Breast epithelium (tissue), 4 donors: ENCODE measurements at regions of chr2 and their contacts with region 1.

Region 1: DNA sequence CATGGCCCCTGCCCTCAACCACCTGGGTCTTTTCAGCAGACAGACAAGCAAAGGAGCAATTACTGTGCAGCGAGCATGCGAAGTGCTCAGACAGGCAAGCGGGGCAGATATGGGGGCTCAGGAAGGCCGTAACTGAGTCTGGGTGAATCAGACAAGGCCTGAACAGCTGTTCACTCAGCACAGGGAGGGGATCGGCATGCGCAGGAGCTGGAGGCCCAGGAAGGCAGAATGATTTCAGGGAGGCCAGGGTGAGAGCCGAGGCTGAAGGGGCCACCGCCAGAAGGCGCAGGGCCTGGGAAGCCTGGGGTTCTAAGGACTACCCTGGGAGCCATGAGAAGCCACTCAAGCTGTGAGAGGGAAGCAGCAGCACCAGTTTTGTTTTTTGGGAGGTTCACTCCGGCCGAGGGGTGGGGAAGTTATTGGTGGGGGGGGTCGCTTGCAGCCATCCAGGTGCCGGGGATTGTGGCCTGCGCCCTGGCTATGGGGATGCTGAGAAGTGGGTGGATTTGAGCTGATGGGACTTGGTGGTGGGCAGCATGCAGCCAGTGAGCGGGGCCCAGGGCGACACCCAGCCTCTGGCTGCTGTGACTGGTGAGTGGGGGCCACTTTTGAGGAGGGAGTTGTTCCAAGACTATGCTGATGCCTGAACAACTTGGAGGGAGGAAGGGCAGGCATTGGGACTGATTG is 132.2 kb downstream of the TSN start:
- DNase-seq: no peak
- H3K4me3 ChIP-seq: no peak overlapping the region
- H3K27ac ChIP-seq: no peak overlapping the region
- H3K4me1 ChIP-seq: no peaks in the 10 kb centered on the region
- H3K27me3 ChIP-seq: no peaks in the 10 kb centered on the region
- CTCF ChIP-seq: no peak
- POLR2A ChIP-seq: no peak

Region 2: DNA sequence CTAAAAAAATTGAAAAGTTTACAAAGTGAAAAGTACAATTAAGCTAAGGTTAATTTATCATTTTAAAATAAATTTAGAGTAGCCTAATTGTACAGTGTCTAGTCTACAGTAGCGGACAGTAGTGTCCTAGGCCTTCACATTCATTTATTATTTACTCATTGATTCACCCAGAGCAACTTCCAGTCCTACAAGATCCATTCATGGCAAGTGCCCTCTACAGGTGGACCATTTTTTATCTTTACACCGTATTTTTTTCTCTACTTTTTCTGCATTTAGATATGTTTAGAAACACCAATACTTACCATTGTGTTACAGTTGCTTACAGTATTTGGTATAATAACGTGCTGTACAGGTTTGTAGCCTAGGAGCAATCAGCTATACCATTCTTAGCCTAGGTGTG is 48.1 kb before region 1 on chr2:
- intact Hi-C with region 1: loop called (anchors 1 kb)
- DNase-seq: no peak
- H3K4me3 ChIP-seq: no peak overlapping the region
- H3K27ac ChIP-seq: no peak overlapping the region
- H3K4me1 ChIP-seq: no peaks in the 10 kb centered on the region
- H3K27me3 ChIP-seq: no peaks in the 10 kb centered on the region
- CTCF ChIP-seq: no peak
- POLR2A ChIP-seq: no peak

Region 3: DNA sequence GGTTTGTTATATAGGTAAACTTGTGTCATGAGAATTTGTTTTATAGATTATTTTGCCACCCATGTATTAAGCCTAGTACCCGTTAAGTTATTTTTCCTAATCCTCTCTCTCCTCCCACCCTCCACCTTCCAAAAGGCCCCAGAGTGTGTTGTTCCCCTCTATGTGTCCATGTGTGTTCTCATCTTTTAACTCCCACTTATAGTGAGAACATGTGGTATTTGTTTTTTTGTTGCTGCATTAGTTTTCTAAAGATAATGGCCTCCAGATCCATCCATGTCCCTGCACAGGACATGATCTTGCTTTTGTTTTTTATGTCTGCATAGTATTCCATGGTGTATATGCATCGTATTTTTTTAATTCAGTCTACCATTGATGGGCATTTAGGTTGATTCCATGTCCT is 1061.9 kb after region 1 on chr2:
- intact Hi-C with region 1: no loop called
- DNase-seq: no peak
- H3K4me3 ChIP-seq: no peak overlapping the region
- H3K27ac ChIP-seq: no peak overlapping the region
- H3K4me1 ChIP-seq: no peaks in the 10 kb centered on the region
- H3K27me3 ChIP-seq: no peaks in the 10 kb centered on the region
- CTCF ChIP-seq: no peak
- POLR2A ChIP-seq: no peak

Region 4: GRCh38 chr2:122980671-122981070 is 1093.0 kb after region 1 on chr2:
- intact Hi-C with region 1: no loop called
- DNase-seq: peak in 1 of 2 donors; percentile 46
- H3K4me3 ChIP-seq: no peak overlapping the region
- H3K27ac ChIP-seq: no peak overlapping the region
- H3K4me1 ChIP-seq: no peaks in the 10 kb centered on the region
- H3K27me3 ChIP-seq: no peaks in the 10 kb centered on the region
- CTCF ChIP-seq: no peak
- POLR2A ChIP-seq: no peak